Activated CD4-positive, alpha-beta memory T cell treated with anti-CD3 and anti-CD28 coated beads, Interleukin-2, amount 10 ng/mL, durations not matched to agents 7 days and 5 days (primary cell): ENCODE measurements at regions of chr19 and their contacts with region 1.

Region 1: GRCh38 chr19:12890787-12891552 is at the start of gene GCDH:
- DNase-seq: peak; percentile 98
- H3K4me3 Mint-ChIP-seq: peak within 1 kb of the TSS; percentile 98
- H3K27ac Mint-ChIP-seq: peak within 1 kb of the TSS; percentile 79
- H3K4me1 Mint-ChIP-seq: peaks cover 33% of the 10 kb centered on the region
- H3K27me3 Mint-ChIP-seq: no peaks in the 10 kb centered on the region
- total RNA-seq, gene GCDH: 23.3 to 25.1 TPM

Region 2: DNA sequence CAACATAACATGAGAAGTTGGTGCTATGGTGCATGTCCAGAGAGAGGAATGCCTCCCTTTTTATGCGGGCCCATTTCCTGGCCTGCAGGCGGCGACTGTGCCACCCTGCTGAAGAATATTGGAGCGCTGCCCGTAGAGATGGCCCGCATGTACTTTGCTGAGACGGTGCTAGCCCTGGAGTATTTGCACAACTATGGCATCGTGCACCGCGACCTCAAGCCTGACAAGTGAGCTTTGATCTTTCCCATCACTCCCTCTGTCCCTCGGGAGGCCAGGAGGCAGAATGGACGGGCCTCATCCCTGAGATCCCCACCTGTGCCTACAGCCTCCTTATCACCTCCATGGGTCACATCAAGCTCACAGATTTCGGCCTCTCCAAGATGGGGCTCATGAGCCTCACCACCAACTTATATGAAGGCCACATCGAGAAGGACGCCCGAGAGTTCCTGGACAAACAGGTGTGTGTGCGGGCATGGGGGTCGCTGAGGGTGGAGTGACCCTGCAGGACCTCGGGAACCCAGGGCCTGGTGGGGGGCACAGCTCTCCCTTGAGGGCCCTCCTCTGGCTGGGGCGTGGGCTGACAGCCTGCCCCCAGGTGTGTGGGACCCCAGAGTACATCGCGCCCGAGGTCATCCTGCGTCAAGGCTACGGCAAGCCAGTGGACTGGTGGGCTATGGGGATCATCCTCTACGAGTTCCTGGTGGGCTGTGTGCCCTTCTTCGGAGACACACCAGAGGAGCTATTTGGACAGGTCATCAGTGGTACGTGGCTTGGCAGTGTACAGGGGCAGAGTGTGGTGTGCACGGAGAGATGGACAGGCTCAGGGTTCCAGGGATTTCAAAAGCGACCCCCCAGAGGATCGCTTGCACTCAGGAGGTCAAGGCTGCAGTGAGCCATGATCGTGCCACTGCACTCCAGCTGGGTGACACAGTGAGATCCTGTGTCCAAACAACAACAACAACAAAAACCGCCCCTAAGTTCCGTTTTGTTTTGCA is 26.0 kb before region 1 on chr19:
- CTCF ChIA-PET with region 1: no interaction called
- POLR2A ChIA-PET with region 1: no interaction called
- DNase-seq: no peak
- H3K4me3 Mint-ChIP-seq: no peak overlapping the region
- H3K27ac Mint-ChIP-seq: no peak overlapping the region
- H3K4me1 Mint-ChIP-seq: peaks cover 8% of the 10 kb centered on the region
- H3K27me3 Mint-ChIP-seq: peaks cover 3% of the 10 kb centered on the region

Region 3: GRCh38 chr19:12913011-12913561 is 22.1 kb after region 1 on chr19:
- CTCF ChIA-PET with region 1: interaction called, 7 read pairs
- POLR2A ChIA-PET with region 1: interaction called, 11 read pairs
- DNase-seq: no peak
- H3K4me3 Mint-ChIP-seq: no peak overlapping the region
- H3K27ac Mint-ChIP-seq: no peak overlapping the region
- H3K4me1 Mint-ChIP-seq: peaks cover 30% of the 10 kb centered on the region
- H3K27me3 Mint-ChIP-seq: no peaks in the 10 kb centered on the region

Region 4: GRCh38 chr19:12921047-12921446 is 30.1 kb after region 1 on chr19:
- CTCF ChIA-PET with region 1: interaction called, 6 read pairs
- POLR2A ChIA-PET with region 1: interaction called, 15 read pairs
- DNase-seq: no peak
- H3K4me3 Mint-ChIP-seq: no peak overlapping the region
- H3K27ac Mint-ChIP-seq: peak overlapping the region; percentile 30
- H3K4me1 Mint-ChIP-seq: peaks cover 24% of the 10 kb centered on the region
- H3K27me3 Mint-ChIP-seq: no peaks in the 10 kb centered on the region